Activated CD8-positive, alpha-beta memory T cell treated with anti-CD3 and anti-CD28 coated beads, Interleukin-2, amount 10 ng/mL, durations not matched to agents 7 days and 5 days (primary cell): ENCODE measurements at regions of chr1 and their contacts with region 1.

Region 1: DNA sequence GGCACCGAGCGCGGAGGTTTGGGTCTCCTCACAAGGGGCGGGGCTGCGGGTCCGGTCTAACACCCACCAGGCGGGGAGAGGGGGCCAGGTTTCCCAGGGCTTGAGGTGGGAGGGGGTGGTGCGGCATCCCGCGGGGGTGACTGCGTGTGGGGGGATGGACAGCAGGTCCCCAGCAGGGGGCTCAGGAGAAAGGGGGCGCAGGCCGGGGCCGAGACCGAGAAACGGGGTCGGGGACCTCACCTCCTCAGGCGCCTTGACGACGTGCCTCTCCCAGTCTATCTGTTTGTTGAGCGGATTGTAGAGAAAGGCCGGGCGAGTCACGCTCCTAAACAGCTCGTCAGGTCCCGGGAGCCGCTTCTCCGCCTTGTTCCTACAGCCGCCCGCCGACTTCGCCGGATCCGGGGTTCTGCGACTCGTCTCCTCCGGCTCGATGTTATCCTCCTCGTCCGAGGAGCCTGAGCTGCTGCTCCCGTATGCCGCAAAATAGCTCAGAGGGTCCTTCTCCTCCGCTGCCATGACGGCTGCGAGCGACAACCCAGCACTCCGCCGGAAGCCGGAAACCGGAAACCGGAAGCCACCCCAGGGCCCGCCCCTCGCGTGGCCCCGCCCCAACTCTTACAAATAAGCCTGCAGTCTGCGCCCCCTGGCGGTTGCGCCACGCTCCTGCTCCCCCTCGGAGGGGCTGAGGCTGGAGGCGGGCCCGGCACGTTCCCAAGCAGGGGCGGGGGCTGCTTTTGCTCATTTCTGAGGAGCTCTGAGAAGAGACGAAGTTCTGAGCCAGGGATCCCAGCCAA is at the start of gene C1orf52:
- DNase-seq: peak; percentile 96
- ATAC-seq: peak; percentile 96
- H3K4me3 Mint-ChIP-seq: peak within 1 kb of the TSS; percentile 96
- H3K27ac Mint-ChIP-seq: peak within 1 kb of the TSS; percentile 95
- H3K4me1 Mint-ChIP-seq: peaks cover 30% of the 10 kb centered on the region
- H3K27me3 Mint-ChIP-seq: no peaks in the 10 kb centered on the region
- total RNA-seq, gene C1orf52: 23.5 to 28.7 TPM

Region 2: DNA sequence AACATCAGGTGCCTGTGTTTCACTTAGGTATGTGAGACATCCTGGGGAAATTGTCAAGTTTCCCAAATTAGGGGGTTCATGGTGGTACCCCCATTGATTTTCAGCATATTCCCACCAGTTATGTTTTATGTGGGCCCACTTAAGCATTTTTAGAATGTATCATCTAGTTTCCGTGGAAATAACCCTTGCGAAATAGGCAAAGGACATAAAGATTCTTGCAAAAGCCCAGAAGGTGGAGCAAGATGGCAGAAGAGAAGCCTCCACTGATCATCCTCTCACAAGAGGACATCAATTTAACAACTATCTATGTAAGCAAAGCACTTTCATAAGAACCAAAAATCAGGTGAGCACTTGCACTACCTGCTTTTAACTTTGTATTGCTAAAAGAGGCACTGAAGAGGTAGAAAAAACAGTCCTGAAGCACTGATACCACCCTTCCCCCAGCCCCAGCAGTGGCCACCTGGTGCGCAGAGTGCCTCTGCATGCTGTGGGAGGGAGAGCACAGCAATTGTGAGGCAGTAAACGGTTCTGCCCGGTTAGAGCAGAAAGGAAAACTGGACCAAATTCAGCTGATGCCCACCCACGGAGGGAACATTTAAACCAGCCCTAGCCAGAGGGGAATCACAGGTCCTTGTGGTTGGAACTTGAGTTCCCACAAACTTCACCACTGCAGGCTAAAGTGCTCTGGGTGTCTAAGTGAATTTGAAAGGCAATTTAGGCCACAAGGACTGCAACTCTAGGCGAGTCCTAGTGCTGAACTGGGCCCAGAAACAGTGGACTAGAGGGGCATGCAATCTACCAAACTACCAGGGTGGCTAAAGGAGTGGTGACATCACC is 285.6 kb before region 1 on chr1:
- CTCF ChIA-PET with region 1: interaction called, 10 read pairs
- DNase-seq: peak; percentile 51
- ATAC-seq: peak; percentile 18
- H3K4me3 Mint-ChIP-seq: no peak overlapping the region
- H3K27ac Mint-ChIP-seq: peak overlapping the region; percentile 97
- H3K4me1 Mint-ChIP-seq: peaks cover 70% of the 10 kb centered on the region
- H3K27me3 Mint-ChIP-seq: no peaks in the 10 kb centered on the region

Region 3: GRCh38 chr1:85061711-85062424 is 197.4 kb before region 1 on chr1:
- CTCF ChIA-PET with region 1: interaction called, 11 read pairs
- DNase-seq: peak; percentile 95
- ATAC-seq: peak; percentile 99
- H3K4me3 Mint-ChIP-seq: peak overlapping the region; percentile 78
- H3K27ac Mint-ChIP-seq: peak overlapping the region; percentile 76
- H3K4me1 Mint-ChIP-seq: peaks cover 16% of the 10 kb centered on the region
- H3K27me3 Mint-ChIP-seq: peaks cover 4% of the 10 kb centered on the region

Region 4: DNA sequence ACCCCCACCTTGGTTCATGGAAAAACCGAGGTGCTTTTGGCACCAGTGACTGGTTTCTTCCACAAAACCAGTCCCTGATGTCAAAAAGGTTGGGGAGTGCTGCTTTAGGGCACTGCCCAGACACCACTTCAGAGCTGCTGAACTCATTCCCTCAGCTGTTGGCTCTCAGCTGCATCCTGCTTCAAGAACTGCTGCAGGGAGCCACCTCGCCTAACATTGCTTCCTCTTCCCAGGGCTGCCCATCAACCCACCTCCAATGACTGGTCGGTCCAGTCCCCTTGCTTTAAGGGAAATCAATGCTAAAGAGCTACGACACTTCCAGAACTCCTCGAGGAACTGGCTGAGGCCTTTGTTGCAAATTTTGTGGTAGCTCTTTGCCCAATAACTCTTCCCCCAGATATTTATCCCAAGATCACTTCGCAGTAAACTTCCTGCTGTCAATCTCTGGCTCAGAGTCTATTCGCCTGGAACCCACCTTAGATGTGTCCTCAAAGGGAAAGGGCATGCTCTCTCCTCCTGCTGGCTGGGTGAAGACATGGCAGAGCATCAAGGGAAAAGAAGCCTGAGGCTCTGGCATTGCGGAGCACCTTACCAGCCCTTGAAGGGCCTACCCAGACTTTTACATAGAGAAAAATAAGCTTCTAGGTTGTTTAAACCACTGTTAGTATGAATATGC is 28.9 kb before region 1 on chr1:
- CTCF ChIA-PET with region 1: interaction called, 12 read pairs
- DNase-seq: no peak
- ATAC-seq: peak; percentile 53
- H3K4me3 Mint-ChIP-seq: no peak overlapping the region
- H3K27ac Mint-ChIP-seq: no peak overlapping the region
- H3K4me1 Mint-ChIP-seq: no peaks in the 10 kb centered on the region
- H3K27me3 Mint-ChIP-seq: peaks cover 12% of the 10 kb centered on the region

Region 5: DNA sequence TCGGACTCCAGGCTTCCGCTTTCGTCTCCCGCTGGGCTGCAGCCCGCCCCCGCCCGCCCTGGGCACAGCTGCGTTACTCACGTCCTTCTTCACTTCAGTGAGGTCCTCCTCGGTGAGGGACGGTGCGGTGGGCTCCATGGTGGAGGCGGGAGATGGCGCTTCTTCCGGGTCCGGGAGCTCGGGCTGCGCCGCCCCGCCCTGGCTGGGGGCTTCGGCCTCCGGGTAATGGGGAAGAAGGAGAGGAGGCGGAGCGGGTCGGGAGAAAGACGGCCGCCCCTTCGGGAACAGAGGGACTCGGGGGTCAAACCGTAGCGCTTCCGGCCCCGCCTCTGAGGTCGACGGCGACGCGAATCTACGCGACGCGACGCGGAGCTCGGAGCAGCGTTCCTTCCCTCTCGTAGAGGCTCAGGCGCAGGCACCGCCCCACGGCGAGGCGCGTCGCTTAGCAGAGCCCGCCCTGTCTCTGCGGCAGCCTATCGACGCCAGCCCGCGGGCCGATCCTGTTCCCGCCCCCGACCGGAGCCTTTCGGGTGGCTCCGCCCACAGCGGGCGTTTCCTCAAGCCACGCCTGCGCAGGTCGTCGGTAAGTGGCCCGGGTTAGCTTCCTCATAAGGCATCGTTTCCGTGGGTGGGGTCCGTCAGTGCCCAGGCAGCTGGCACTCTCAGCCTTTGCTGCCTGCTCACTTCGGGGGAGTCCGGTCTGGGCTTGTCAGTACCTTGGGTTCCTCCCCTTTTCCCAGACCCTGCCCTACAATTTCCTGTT is 17.1 kb after region 1 on chr1 and contains the start of gene BCL10:
- CTCF ChIA-PET with region 1: interaction called, 38 read pairs
- DNase-seq: peak; percentile 99
- ATAC-seq: peak; percentile 98
- H3K4me3 Mint-ChIP-seq: peak within 1 kb of the TSS; percentile 85
- H3K27ac Mint-ChIP-seq: peak within 1 kb of the TSS; percentile 88
- H3K4me1 Mint-ChIP-seq: peaks cover 49% of the 10 kb centered on the region
- H3K27me3 Mint-ChIP-seq: peaks cover 27% of the 10 kb centered on the region
- total RNA-seq, gene BCL10: 23.9 to 26.9 TPM

Region 6: DNA sequence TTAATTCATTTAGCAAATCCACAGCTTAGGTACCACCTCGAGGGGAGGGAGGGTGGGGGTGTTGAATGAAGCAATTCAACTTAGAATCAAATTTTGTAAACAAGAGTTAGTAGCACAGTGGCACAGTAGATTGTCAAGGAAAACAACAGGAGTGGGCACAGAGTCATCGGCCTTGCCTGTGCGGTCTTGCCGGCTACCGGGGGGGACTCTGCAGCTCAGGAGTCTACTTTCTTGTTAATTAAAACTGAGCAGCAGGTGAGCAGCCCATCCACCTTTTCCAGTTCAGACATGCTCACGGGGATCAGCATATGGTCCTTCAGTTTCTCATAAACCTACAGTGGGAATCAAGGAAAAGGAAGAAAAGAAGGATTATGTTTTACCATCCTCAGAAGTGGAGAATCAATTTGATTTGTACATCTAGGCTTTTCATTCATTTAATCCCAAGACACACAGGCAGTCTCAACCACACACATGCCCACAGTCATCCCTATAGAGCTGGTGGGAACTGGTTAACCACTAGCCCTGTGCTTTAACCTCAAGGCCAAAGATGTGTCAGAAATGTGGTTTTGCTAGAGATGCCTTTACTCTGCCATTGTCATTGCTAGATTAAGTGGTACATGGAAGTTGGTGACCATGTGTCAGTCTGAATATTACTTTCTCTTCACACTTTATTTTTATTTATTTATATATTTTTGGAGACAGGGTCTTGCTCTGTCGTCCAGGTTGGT is 62.1 kb after region 1 on chr1:
- CTCF ChIA-PET with region 1: no interaction called
- DNase-seq: peak; percentile 68
- ATAC-seq: peak; percentile 51
- H3K4me3 Mint-ChIP-seq: no peak overlapping the region
- H3K27ac Mint-ChIP-seq: no peak overlapping the region
- H3K4me1 Mint-ChIP-seq: peaks cover 9% of the 10 kb centered on the region
- H3K27me3 Mint-ChIP-seq: peaks cover 76% of the 10 kb centered on the region